ENCODE measurements at regions of chr15 and their contacts with region 1.

Region 1: GRCh38 chr15:92903941-92904831 is 4.1 kb downstream of the CHD2 start:
- DNase-seq: peak; percentile 95 to 99 (median 96)
- ATAC-seq: peak; percentile 82
- H3K4me3 ChIP-seq: peak overlapping the region; percentile 76
- H3K27ac ChIP-seq: peak overlapping the region; percentile 99
- H3K4me1 ChIP-seq: peaks cover 0 to 23% of the 10 kb centered on the region in 2 experiments; a peak in 3 of 5 replicates
- H3K27me3 ChIP-seq: no peaks in the 10 kb centered on the region
- CTCF ChIP-seq: no peak; a peak in 2 of 6 replicates
- EP300 ChIP-seq: peak; percentile 45; the same call in 1 of the 2 replicates
- POLR2A ChIP-seq: peak; percentile 93
- RAD21 ChIP-seq: peak in 1 of 2 experiments; percentile 10; a peak in 3 of 4 replicates

Region 2: DNA sequence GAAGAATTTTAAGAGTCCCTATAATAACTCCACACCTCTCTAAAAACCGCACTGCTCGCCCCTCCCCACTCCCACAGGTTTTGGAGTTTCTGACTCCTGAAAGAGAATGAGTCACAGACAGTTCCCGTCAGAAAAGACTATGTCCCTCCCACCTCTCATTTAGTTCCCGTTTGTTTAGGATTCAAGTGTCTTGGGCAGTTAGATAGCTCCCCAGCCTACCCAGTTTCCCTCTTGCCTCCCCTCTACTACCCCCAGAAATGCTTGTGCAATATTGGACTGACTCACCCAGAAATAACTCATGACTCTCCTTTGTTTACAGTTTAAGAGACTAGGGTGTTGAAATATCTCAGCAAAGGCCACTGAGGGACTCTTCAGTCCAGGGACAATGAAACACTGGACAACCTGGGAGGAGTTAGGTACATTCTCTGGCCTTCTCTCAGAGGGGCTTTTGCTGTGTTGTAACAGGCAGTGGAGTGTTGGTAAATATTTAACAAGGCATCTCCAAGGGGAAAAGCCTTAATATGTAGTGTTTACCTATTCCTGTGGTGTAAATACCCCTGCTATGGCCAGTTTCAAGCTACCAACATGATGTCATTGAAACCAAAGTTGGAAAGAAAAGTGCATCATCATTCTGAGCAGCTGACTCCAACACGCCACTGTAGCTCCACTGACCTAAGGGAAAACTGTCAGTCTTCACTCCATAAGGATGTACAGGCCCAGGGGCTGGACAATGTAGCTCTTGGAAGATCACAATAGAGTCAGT is 100.2 kb before region 1 on chr15:
- CTCF ChIA-PET with region 1: interaction called, 3 read pairs
- POLR2A ChIA-PET with region 1: interaction called, 109 read pairs
- in situ Hi-C with region 1: no loop called
- intact Hi-C with region 1: no loop called
- DNase-seq: peak; percentile 72 to 96 (median 80)
- ATAC-seq: peak; percentile 85
- H3K4me3 ChIP-seq: no peak overlapping the region
- H3K27ac ChIP-seq: peak overlapping the region; percentile 99
- H3K4me1 ChIP-seq: peaks cover 42 to 48% of the 10 kb centered on the region in 2 experiments
- H3K27me3 ChIP-seq: no peaks in the 10 kb centered on the region
- CTCF ChIP-seq: 0 out of 6 replicates have a peak, but pooled peaks of 1 of the 3 experiments have one; percentile 1
- EP300 ChIP-seq: peak; percentile 93
- POLR2A ChIP-seq: peak; percentile 53
- RAD21 ChIP-seq: no peak

Region 3: DNA sequence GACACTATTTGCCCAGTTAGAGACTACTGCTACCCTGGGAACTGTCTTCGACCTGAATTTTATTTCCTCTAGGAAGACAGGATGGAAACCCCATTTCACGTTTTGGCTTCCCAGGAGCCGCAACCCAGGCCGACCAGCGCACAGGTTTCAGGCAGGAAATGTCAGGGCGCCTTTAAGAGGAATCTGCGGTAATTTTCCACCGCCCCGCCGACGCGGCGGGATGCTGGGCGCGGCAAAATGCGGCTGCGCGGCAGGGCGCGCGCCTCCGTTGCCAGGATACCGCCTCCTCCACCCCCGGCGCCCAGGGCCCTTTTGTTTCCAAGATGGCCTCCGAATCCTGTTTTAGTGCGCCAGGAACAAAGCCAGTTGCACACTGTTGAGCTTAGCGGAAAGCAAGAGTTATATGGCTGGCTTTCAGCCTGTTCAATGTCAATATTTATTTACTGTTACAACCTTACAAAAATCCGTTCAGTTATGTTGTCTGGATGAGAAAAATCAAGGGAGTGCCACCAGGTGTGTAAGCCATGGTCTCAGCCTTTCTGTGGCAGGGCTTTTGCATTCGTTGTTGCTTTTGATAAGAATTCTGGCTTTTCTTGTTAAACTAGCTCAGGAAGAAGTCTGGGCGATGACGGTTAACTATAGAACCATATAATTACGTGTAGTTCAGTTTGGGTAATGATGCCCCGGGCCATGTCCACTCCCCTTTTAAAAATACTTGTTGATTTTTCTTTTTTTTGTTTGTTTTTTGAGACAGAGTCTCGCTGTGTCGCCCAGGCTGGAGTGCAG is 83.8 kb before region 1 on chr15:
- CTCF ChIA-PET with region 1: no interaction called
- POLR2A ChIA-PET with region 1: interaction called, 13 read pairs
- in situ Hi-C with region 1: no loop called
- intact Hi-C with region 1: no loop called
- DNase-seq: peak; percentile 92 to 96 (median 94)
- ATAC-seq: peak; percentile 85
- H3K4me3 ChIP-seq: peak overlapping the region; percentile 25
- H3K27ac ChIP-seq: peak overlapping the region; percentile 80
- H3K4me1 ChIP-seq: peaks cover 24 to 32% of the 10 kb centered on the region in 2 experiments
- H3K27me3 ChIP-seq: no peaks in the 10 kb centered on the region
- CTCF ChIP-seq: no peak
- EP300 ChIP-seq: no peak
- POLR2A ChIP-seq: peak; percentile 79
- RAD21 ChIP-seq: 0 out of 4 replicates have a peak, but pooled peaks of 1 of the 2 experiments have one; percentile 14

Region 4: DNA sequence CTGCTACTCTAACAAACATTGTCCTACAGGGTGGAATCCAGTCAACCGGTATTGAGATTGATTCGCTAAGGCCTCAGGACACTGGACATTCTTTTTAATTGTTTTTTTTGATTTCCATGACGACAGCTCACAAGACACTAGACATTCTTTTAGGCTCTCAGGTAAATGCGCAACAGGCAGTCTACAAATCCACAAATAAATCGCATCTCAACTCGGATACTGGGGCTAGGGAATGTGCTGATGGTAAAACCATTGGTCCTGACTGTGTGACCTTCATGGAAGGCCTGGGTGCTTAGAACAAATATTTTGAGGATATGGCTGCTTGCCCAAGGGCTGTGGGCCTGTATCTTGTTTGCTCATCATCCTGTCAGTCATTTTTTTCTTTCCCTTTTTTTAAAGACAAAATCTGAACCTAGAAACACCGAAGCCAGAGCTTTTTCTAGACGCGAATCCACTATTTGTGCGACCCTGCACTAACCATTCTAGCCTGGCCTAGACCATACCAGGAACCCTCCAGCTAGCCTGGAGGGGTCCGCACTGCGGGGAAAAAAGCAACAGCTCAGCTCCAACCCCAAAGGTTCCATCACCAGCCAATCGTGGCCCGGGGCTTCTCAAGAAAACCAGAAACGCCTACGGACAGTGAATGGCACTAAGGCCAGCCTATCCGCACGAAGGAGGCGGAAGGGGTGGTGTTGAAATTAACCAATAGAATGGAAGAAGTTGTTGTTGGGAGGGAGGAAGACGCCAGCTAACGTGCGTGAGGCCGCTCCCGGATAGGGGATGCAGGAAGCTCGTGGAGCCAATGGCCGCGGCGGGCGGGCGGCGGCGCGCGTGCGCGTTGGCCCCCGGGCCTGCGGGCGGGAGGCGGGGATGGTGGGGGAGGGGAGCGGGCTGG is 22.1 kb before region 1 on chr15:
- CTCF ChIA-PET with region 1: no interaction called
- POLR2A ChIA-PET with region 1: interaction called, 69 read pairs
- in situ Hi-C with region 1: no loop called
- intact Hi-C with region 1: loop called (anchors 1 kb)
- DNase-seq: peak; percentile 98 to 99 (median 99)
- ATAC-seq: peak; percentile 88
- H3K4me3 ChIP-seq: peak overlapping the region; percentile 91
- H3K27ac ChIP-seq: peak overlapping the region; percentile 86
- H3K4me1 ChIP-seq: peaks cover 20 to 44% of the 10 kb centered on the region in 2 experiments
- H3K27me3 ChIP-seq: no peaks in the 10 kb centered on the region
- CTCF ChIP-seq: peak in 1 of 3 experiments; percentile 7; a peak in 1 of 6 replicates
- EP300 ChIP-seq: no peak; the same call in 1 of the 2 replicates
- POLR2A ChIP-seq: peak; percentile 98
- RAD21 ChIP-seq: peak; percentile 5 to 23; a peak in 1 of 4 replicates

Region 5: DNA sequence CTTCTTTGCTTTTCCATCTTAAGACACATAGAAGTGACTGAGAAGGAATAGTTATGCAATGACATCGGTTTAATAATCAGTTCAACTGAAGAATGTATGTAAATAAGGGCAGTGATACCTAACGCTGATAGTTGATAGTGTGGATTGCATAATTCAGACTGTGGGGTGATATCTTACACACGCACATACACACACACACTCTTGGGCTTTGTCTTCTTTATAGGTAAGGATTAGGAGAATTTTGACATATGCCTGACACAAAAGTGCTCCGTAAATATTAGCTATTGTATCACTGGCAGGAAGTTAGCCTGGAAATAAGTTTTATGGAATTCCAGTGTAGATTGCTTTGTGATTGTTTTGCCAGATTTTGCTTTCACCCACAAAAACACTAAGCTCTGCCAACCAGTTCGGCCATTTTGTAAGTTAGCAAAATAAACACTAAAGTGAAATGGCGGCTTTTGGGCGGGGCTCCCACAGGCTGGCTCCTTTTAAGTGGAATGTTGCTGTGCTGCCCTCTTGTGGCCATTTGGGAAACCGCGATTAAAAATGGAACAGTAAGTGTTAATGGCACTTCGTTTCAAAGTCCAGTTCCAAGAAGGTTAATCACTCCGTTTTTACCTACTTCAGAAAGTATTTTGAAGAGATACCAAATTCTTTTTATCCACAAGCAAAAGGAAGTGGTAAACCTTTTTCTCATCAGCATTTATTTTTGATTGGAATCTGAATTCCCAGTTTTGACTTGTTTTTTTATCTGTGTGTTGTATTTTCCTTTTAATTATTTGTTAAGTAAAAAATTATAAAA is 13.6 kb after region 1 on chr15:
- CTCF ChIA-PET with region 1: no interaction called
- POLR2A ChIA-PET with region 1: interaction called, 109 read pairs
- in situ Hi-C with region 1: no loop called
- intact Hi-C with region 1: loop called (anchors 2 kb)
- DNase-seq: peak; percentile 77 to 96 (median 80)
- ATAC-seq: peak; percentile 70
- H3K4me3 ChIP-seq: no peak overlapping the region
- H3K27ac ChIP-seq: peak overlapping the region; percentile 82
- H3K4me1 ChIP-seq: peaks cover 0 to 39% of the 10 kb centered on the region in 2 experiments; a peak in 4 of 5 replicates
- H3K27me3 ChIP-seq: no peaks in the 10 kb centered on the region
- CTCF ChIP-seq: peak; percentile 76 to 94 (median 86)
- EP300 ChIP-seq: peak; percentile 51; the same call in 1 of the 2 replicates
- POLR2A ChIP-seq: peak; percentile 46; the same call in 1 of the 2 replicates
- RAD21 ChIP-seq: peak; percentile 88 to 90

Region 6: DNA sequence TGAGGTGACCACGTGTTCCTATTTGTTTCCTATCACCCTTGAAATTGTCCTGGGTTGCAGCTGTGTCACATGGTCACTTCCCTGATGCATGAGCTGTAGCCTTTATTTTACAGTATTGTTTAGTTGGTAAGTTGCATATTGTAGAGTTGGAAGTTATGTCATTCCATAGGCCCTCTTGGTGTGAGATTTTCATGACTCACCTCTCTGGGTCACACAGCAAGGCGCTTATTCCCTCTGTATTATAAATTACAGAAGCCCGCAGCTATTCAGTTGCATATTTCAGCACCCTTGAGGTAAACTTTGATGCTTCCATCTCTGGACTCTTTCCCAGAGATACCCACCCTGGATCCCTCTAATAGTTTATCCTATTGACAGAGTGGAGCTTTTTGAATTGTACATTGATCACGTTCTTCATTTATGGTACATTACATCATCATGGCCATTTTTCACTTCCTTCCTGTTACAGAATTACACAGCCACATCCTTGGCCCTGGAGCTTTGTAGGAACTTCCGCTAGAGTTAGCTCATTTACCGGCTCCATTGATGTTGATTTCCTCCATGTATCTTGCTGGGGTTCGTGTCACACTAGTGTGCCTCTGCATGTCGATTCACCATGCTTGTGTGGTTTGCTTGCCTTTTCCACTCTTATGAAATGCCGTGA is 727.9 kb after region 1 on chr15:
- CTCF ChIA-PET with region 1: no interaction called
- POLR2A ChIA-PET with region 1: no interaction called
- in situ Hi-C with region 1: no loop called
- intact Hi-C with region 1: no loop called
- DNase-seq: no peak
- ATAC-seq: no peak
- H3K4me3 ChIP-seq: no peak overlapping the region
- H3K27ac ChIP-seq: no peak overlapping the region
- H3K4me1 ChIP-seq: no peaks in the 10 kb centered on the region
- H3K27me3 ChIP-seq: no peaks in the 10 kb centered on the region
- CTCF ChIP-seq: no peak
- EP300 ChIP-seq: no peak
- POLR2A ChIP-seq: no peak
- RAD21 ChIP-seq: no peak

Measured in K562 (cell line).